Heart right ventricle (tissue), 16 donors: ENCODE measurements at regions of chr18 and their contacts with region 1.

Region 1: GRCh38 chr18:43830947-43831346 is 553.7 kb upstream of the SYT4 start:
- DNase-seq: no peak
- ATAC-seq: peak in 5 of 8 donors; percentile 58 to 97 (median 67)
- H3K4me3 ChIP-seq: no peak overlapping the region
- H3K27ac ChIP-seq: peak overlapping the region in 1 of 10 donors; percentile 55
- H3K4me1 ChIP-seq: no peaks in the 10 kb centered on the region
- H3K27me3 ChIP-seq: no peaks in the 10 kb centered on the region
- CTCF ChIP-seq: no peak

Region 2: DNA sequence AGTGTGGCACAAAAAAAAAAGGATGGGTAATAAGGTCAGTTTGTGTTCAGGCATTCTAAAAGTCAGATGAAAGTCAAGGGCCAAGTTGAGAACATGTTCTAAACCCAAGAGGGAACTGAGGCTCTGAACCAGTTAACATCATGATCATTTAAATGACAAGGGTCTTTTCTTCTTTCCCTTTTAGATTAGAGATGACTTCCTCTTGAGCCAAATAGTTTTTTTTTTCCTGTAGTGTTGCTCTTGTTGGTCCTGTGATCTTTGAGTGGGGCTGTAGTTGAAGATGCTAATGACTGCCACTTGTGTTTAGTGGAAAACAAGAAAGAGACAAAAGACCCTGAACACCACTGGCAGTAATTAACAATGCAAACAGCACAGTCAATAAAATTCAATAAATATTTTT is 70.9 kb before region 1 on chr18:
- intact Hi-C with region 1: loop called in 1 of 10 experiments (anchors 10 kb)
- DNase-seq: no peak
- ATAC-seq: no peak
- H3K4me3 ChIP-seq: no peak overlapping the region
- H3K27ac ChIP-seq: no peak overlapping the region
- H3K4me1 ChIP-seq: no peaks in the 10 kb centered on the region
- H3K27me3 ChIP-seq: no peaks in the 10 kb centered on the region
- CTCF ChIP-seq: no peak

Region 3: DNA sequence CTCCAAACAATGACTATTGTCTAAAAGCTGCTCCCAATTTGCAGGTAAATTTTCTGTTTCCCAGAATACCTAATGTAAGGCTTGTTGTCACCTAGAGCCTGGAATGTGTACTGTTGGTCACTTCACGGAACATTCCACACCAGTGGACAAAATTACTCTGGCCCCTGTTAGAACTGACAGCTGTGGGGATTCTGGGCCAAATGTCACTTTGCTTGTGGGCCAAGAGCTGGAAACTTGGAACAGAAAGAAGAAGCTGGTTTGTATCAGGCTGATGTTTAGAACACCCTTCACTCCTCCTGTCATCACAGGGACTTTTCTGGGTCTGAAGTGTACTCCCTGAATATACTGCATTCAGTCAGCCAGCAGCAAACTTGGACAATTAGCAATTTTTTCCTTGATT is 58.0 kb before region 1 on chr18:
- intact Hi-C with region 1: loop called in 2 of 10 experiments (anchors 10 kb)
- DNase-seq: peak; percentile 11 to 77
- ATAC-seq: peak; percentile 93 to 98 (median 98)
- H3K4me3 ChIP-seq: no peak overlapping the region
- H3K27ac ChIP-seq: peak overlapping the region in 5 of 10 donors; percentile 20 to 51 (median 28)
- H3K4me1 ChIP-seq: peaks cover 0 to 24% (median 9%) of the 10 kb centered on the region in 9 donors
- H3K27me3 ChIP-seq: no peaks in the 10 kb centered on the region
- CTCF ChIP-seq: peak in 5 of 9 donors; percentile 19 to 47 (median 29)